ENCODE measurements at regions of chr12 and their contacts with region 1.

Region 1: DNA sequence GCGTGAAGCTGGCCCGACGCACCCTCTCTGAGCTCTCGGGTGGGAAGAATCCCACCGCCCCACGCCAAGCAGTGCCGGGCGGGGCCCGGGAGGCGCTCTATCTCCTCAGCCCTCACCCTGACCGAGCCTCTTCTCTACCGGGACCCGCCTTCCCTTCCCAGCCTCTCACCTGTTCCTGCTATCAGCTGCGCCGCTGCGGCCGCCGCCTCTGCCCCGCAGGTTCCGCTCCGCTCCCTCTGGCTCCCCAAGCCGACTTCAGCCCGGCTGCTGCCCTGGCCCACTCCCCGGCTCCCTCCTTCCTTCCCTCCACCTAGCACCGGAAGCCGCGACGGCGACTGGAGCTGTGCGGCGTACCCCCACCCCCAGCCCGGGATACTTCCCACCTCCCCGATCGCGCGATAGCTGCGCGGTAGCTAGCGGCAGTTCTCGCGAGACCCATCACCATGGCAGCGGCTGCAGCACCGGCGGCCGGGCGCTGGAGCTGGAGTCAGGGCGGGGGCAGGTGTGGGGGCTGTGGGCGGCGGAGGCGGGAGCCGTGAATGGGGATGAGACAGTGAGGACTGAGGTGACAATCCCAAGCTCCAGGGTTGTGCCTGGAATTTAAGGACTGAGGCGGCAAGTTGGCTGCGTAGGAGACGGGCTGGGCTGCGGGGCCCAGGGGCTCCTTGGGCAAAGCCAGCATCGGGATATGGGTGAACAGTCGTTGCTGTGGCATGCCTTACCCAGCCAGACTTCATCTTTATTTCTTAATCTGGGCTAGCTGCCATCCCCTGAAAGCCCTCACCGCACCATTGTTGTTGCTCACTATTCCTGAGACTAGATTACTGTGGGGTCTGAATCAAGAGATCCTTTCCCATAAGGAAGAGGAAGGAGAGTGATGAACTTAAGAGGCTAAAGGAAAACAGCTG is at the start of gene ARF3:
- DNase-seq: peak; percentile 83 to 95 (median 89)
- ATAC-seq: peak; percentile 97
- H3K4me3 ChIP-seq: peak within 1 kb of the TSS; percentile 76 to 83
- H3K4me3 Mint-ChIP-seq: peak within 1 kb of the TSS; percentile 95 to 98 (median 96)
- H3K27ac ChIP-seq: peak within 1 kb of the TSS; percentile 54
- H3K27ac Mint-ChIP-seq: peak within 1 kb of the TSS; percentile 71 to 88
- H3K4me1 ChIP-seq: peaks cover 11 to 24% of the 10 kb centered on the region in 2 experiments
- H3K4me1 Mint-ChIP-seq: peaks cover 43 to 48% (median 44%) of the 10 kb centered on the region in 3 donors
- H3K27me3 ChIP-seq: peaks cover 0 to 2% of the 10 kb centered on the region in 2 experiments
- H3K27me3 Mint-ChIP-seq: peaks cover 0 to 4% of the 10 kb centered on the region in 2 donors
- total RNA-seq, gene ARF3: 63.6 to 82.9 (median 74.3) TPM

Region 2: GRCh38 chr12:48977315-48978281 is 20.2 kb after region 1 on chr12:
- CTCF ChIA-PET with region 1: interaction called, 7 to 17 read pairs
- POLR2A ChIA-PET with region 1: interaction called in 1 of 2 experiments, 4 read pairs
- DNase-seq: peak in 34 of 35 experiments; percentile 60 to 91 (median 79)
- ATAC-seq: peak; percentile 36 to 61 (median 50)
- H3K4me3 ChIP-seq: no peak overlapping the region
- H3K4me3 Mint-ChIP-seq: peak overlapping the region; percentile 34 to 86 (median 41)
- H3K27ac ChIP-seq: no peak overlapping the region
- H3K27ac Mint-ChIP-seq: peak overlapping the region in 1 of 2 donors; percentile 39
- H3K4me1 ChIP-seq: peaks cover 20 to 63% of the 10 kb centered on the region in 2 experiments
- H3K4me1 Mint-ChIP-seq: peaks cover 44 to 54% (median 54%) of the 10 kb centered on the region in 3 donors
- H3K27me3 ChIP-seq: peaks cover 10 to 60% of the 10 kb centered on the region in 2 experiments
- H3K27me3 Mint-ChIP-seq: peaks cover 26 to 33% of the 10 kb centered on the region in 2 donors

Region 3: DNA sequence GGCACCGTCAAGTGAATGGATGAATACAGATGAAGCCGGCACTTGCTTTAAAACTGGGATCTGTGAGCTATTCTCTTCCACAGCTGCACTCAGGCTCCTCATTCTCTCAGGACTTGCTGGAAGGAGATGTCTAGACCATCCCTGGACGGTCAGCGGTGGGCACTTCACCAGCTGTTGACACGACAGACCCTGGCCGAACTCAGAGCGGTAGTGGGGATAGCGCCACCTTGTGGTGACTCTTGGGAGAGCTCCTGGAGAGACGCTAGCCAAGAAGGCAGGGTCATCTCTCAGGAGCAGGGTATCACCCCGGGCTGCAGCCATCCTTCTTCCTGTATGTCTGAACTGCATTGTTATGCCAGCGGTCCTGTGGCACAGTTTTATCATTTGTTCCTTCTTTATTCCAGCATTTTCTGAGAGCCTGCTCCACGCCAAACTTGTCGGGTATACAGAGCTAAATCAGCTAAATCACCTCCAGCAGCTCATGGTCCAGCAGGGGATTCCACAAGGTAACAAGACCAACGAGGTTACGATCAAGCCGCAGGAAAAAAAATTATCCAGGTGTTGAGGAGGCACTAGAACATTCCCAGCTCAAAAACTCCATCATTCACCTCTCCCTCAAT is 30.7 kb after region 1 on chr12:
- CTCF ChIA-PET with region 1: interaction called in 1 of 2 experiments, 11 read pairs
- POLR2A ChIA-PET with region 1: interaction called, 3 to 4 read pairs
- DNase-seq: peak in 28 of 35 experiments; percentile 30 to 85 (median 64)
- ATAC-seq: peak; percentile 75 to 84 (median 81)
- H3K4me3 ChIP-seq: no peak overlapping the region
- H3K4me3 Mint-ChIP-seq: no peak overlapping the region
- H3K27ac ChIP-seq: no peak overlapping the region
- H3K27ac Mint-ChIP-seq: peak overlapping the region in 1 of 2 donors; percentile 12
- H3K4me1 ChIP-seq: peaks cover 0 to 5% of the 10 kb centered on the region in 2 experiments
- H3K4me1 Mint-ChIP-seq: peaks cover 7 to 12% (median 7%) of the 10 kb centered on the region in 3 donors
- H3K27me3 ChIP-seq: peaks cover 13 to 43% of the 10 kb centered on the region in 2 experiments
- H3K27me3 Mint-ChIP-seq: peaks cover 26 to 33% of the 10 kb centered on the region in 2 donors

Measured in T-cell (primary cell).